ENCODE measurements at regions of chr18 and their contacts with region 1.

Region 1: GRCh38 chr18:24627644-24628315 is 167.3 kb downstream of the HRH4 start:
- DNase-seq: peak in 1 of 5 donors; percentile 10
- ATAC-seq: peak in 3 of 4 donors; percentile 23 to 66 (median 35)
- H3K4me3 ChIP-seq: peak overlapping the region in 2 of 12 donors; percentile 12 to 28
- H3K27ac ChIP-seq: peak overlapping the region in 8 of 12 donors; percentile 3 to 66 (median 39)
- H3K4me1 ChIP-seq: peaks cover 0 to 48% (median 33%) of the 10 kb centered on the region in 12 donors
- H3K27me3 ChIP-seq: no peaks in the 10 kb centered on the region
- CTCF ChIP-seq: no peak
- POLR2A ChIP-seq: no peak

Region 2: DNA sequence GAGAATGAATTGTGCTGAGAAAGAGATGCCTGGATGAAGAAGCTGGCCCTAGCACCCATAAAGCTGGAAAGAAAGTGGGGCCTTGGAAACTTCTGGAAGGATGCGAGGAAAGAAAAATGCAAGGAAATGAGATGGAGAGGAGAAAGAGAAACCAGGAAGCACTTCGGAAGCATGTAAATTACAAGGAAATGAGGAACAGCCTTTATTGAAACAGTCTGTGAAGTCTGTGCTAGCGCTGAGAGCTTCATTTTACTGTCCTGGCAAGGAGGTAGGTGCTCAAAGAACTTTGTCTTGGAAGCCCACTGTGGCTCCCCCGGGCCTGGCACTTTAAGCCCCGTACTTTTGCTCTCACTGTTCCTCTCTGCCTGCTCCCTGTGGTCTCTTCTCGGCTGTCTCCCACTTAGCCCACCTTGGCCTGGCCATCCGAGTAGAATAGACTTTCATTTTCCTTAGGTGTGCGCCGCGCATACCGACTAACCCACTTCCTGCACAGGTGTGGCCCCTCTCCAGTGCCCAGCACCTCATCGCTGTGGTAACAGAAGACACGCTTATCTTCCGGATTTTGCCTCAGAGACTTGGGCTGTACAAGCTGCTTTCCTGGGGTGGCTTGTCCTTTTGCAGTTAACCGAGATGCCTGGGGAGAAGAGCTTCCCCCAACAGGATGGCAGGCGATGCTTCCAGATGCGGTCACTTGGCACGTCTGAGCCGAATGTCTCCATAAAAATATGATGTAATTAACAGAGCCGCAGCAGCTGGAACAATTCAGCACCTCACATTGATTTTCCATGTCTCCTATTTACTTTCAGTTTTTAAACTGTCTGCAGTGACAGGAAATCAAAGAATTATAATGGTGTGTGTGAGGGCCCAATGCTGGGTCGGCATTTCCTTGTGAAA is 32.3 kb after region 1 on chr18:
- intact Hi-C with region 1: loop called in 2 of 10 experiments (anchors 5 kb)
- DNase-seq: peak; percentile 45 to 75 (median 56)
- ATAC-seq: peak in 3 of 4 donors; percentile 59 to 72 (median 71)
- H3K4me3 ChIP-seq: peak overlapping the region; percentile 12 to 64 (median 45)
- H3K27ac ChIP-seq: peak overlapping the region; percentile 40 to 88 (median 77)
- H3K4me1 ChIP-seq: peaks cover 0 to 42% (median 12%) of the 10 kb centered on the region in 12 donors
- H3K27me3 ChIP-seq: no peaks in the 10 kb centered on the region
- CTCF ChIP-seq: no peak
- POLR2A ChIP-seq: no peak